AG04450 (cell line): ENCODE measurements at regions of chr12 and their contacts with region 1.

Region 1: GRCh38 chr12:47935184-47935583 is 28.2 kb upstream of the TMEM106C start:
- DNase-seq: peak; percentile 72
- H3K4me3 ChIP-seq: no peak overlapping the region
- H3K27ac ChIP-seq: no peak overlapping the region
- H3K27me3 ChIP-seq: peaks cover 8% of the 10 kb centered on the region
- CTCF ChIP-seq: no peak

Region 2: DNA sequence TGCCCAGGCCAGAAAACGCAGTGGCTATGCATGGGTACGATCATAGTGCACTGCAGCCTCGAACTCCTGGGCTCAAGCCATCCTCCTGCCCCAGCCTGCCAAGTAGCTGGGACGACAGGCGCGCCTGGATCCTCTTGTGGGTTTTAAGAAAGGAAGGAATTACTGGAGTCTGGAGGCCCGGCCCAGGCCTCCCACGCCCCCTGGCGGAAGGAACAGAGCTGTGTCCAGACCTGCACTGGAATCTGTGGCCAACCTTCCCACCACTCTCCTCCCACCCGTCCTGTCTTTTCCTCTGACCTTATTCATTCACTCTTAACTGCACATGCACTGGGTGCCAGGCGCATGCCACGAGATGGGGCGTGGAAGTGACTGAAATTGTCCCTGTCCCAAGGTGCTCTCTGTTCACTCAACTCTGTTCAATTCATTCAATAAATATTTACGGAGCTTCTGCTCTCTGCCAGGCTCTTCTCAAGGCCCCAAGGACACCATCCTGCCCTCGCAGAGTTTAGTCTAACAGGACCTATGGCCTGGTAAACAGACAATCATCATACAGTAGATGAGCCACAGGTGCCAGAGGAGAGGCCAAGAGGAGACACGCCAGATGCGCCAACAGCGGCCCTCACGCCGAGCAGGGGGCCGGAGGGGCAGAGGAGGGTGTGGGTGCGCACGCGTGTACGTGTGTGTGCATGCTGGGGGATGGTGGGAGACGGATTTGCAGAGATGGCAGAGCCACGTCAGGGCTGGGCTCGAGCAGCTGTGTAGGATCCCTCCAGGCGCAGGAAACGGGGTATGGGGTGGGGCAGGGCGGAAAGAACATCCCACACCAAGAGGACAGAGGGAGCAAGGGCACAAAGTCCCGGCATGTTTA is 14.5 kb after region 1 on chr12:
- CTCF ChIA-PET with region 1: interaction called, 19 read pairs
- POLR2A ChIA-PET with region 1: interaction called, 5 read pairs
- DNase-seq: peak; percentile 55
- H3K4me3 ChIP-seq: no peak overlapping the region
- H3K27ac ChIP-seq: no peak overlapping the region
- H3K27me3 ChIP-seq: peaks cover 23% of the 10 kb centered on the region
- CTCF ChIP-seq: peak; percentile 92